Transverse colon (tissue), 4 donors: ENCODE measurements at regions of chr1 and their contacts with region 1.

Region 1: GRCh38 chr1:234469376-234469775 is 9.6 kb downstream of the TARBP1 start:
- DNase-seq: no peak
- H3K4me3 ChIP-seq: no peak overlapping the region
- H3K27ac ChIP-seq: no peak overlapping the region
- H3K4me1 ChIP-seq: no peaks in the 10 kb centered on the region
- H3K27me3 ChIP-seq: no peaks in the 10 kb centered on the region
- CTCF ChIP-seq: no peak
- EP300 ChIP-seq: no peak
- POLR2A ChIP-seq: no peak

Region 2: GRCh38 chr1:235351898-235352297 is 882.5 kb after region 1 on chr1:
- in situ Hi-C with region 1: no loop called
- intact Hi-C with region 1: no loop called
- DNase-seq: no peak
- H3K4me3 ChIP-seq: no peak overlapping the region
- H3K27ac ChIP-seq: no peak overlapping the region
- H3K4me1 ChIP-seq: no peaks in the 10 kb centered on the region
- H3K27me3 ChIP-seq: no peaks in the 10 kb centered on the region
- CTCF ChIP-seq: no peak
- EP300 ChIP-seq: no peak
- POLR2A ChIP-seq: no peak

Region 3: GRCh38 chr1:236214761-236215160 is 1745.4 kb after region 1 on chr1:
- in situ Hi-C with region 1: no loop called
- intact Hi-C with region 1: loop called (anchors 5 kb)
- DNase-seq: no peak
- H3K4me3 ChIP-seq: no peak overlapping the region
- H3K27ac ChIP-seq: no peak overlapping the region
- H3K4me1 ChIP-seq: no peaks in the 10 kb centered on the region
- H3K27me3 ChIP-seq: no peaks in the 10 kb centered on the region
- CTCF ChIP-seq: no peak
- EP300 ChIP-seq: no peak
- POLR2A ChIP-seq: no peak